WTC11 (cell line): ENCODE measurements at regions of chr11 and their contacts with region 1.

Region 1: GRCh38 chr11:96045622-96046456 is 121.9 kb upstream of the MTMR2 start:
- DNase-seq: peak; percentile 64
- ATAC-seq: peak; percentile 99
- H3K4me3 Mint-ChIP-seq: peak overlapping the region; percentile 31
- H3K27ac Mint-ChIP-seq: peak overlapping the region; percentile 89; the same call in 1 of the 2 replicates
- H3K4me1 Mint-ChIP-seq: peaks cover 25% of the 10 kb centered on the region
- H3K27me3 Mint-ChIP-seq: no peaks in the 10 kb centered on the region; the same call in 1 of the 2 replicates
- CTCF ChIP-seq: no peak

Region 2: DNA sequence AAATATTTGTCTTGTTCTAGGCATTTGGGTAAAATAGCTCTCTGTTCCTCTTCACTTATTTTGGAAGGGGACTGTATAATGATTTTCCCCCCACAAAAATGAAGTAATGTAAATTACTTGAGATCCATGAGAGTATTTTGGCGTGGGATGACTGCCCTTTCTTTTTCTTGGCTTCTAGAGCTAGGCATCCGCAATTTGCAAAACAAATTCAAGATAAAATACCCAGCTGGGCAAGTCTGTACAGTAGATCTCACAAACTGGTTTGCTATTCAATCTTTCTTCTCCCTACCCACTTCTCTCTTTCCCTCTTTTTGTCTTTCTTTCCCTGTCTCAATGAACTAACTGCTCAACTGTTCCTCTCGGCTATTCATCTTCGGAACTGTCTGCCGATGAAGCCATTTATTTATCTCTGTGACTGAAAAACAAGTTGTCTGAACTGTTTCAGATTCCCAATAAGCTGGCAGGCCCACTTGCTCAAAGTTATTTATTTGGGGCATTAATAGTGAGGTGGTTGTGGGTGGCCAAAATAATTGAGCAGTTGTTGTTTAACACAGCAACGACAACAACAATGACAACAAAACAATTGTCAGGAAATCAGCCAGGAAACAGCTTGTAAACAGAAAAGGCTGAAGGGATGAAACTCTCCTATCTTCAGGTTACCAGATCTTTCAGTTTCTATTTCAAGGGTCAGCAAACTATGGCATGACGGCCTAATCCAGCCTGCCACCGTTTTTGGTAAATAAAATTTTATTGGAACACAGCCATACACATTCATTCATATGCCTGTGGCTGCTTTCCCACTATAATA is 46.0 kb before region 1 on chr11:
- CTCF ChIA-PET with region 1: no interaction called
- POLR2A ChIA-PET with region 1: no interaction called
- DNase-seq: no peak
- ATAC-seq: no peak
- H3K4me3 Mint-ChIP-seq: no peak overlapping the region
- H3K27ac Mint-ChIP-seq: peak overlapping the region; percentile 3; the same call in 1 of the 2 replicates
- H3K4me1 Mint-ChIP-seq: peaks cover 16% of the 10 kb centered on the region
- H3K27me3 Mint-ChIP-seq: no peaks in the 10 kb centered on the region
- CTCF ChIP-seq: no peak

Region 3: GRCh38 chr11:96237766-96238266 is 192.0 kb after region 1 on chr11:
- CTCF ChIA-PET with region 1: interaction called, 12 read pairs
- POLR2A ChIA-PET with region 1: no interaction called
- DNase-seq: no peak
- ATAC-seq: no peak
- H3K4me3 Mint-ChIP-seq: no peak overlapping the region
- H3K27ac Mint-ChIP-seq: no peak overlapping the region
- H3K4me1 Mint-ChIP-seq: peaks cover 29% of the 10 kb centered on the region
- H3K27me3 Mint-ChIP-seq: no peaks in the 10 kb centered on the region
- CTCF ChIP-seq: no peak

Region 4: DNA sequence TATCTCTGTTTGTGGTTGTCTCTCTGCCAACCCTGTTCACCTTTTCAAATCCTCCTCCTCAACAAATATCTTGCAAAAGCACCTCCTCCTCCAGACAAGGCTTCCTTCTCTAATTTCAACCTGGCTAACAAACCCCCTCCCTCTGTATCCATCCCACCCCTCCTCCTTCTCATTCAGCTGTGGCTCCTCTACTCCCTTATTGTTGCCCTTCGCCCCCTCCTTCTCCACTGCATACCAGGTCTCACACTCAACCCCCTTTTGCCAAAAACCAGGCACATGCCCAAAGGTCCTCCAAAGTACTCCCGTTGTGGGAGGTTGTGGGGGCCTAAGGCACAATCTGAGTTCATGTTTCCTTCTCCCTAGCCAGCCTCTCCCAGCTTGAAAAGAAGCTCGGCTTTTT is 454.6 kb after region 1 on chr11:
- CTCF ChIA-PET with region 1: no interaction called
- POLR2A ChIA-PET with region 1: no interaction called
- DNase-seq: no peak
- ATAC-seq: no peak; the same call in 1 of the 2 replicates
- H3K4me3 Mint-ChIP-seq: no peak overlapping the region
- H3K27ac Mint-ChIP-seq: no peak overlapping the region
- H3K4me1 Mint-ChIP-seq: peaks cover 4% of the 10 kb centered on the region; the same call in 1 of the 2 replicates
- H3K27me3 Mint-ChIP-seq: peaks cover 5% of the 10 kb centered on the region; the same call in 1 of the 2 replicates
- CTCF ChIP-seq: no peak